Activated naive CD4-positive, alpha-beta T cell treated with anti-CD3 and anti-CD28 coated beads for 36 hours (primary cell): ENCODE measurements at regions of chr5 and their contacts with region 1.

Region 1: DNA sequence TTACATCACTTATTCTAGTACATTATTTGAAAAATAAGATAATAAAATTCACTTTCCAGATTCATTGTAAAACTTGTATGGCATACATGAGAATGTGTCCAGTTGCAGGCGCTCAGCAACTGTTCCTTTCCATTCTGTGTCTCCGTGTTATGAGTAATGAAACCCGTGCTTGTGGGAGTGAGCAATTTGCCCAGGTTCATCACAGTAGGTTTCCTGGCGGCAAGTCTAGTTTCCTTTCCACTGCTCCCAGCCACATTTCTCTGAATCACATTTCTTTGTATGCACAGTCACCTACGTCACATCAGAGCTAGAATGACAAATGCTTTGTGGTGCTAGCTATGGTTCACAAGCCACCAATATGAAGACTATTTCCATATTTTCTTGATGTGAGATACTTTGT is 39.9 kb downstream of the MOCS2 start:
- DNase-seq: peak; percentile 88
- H3K4me3 Mint-ChIP-seq: no peak overlapping the region
- H3K27ac Mint-ChIP-seq: peak overlapping the region; percentile 12
- H3K4me1 Mint-ChIP-seq: peaks cover 15% of the 10 kb centered on the region
- H3K27me3 Mint-ChIP-seq: no peaks in the 10 kb centered on the region

Region 2: DNA sequence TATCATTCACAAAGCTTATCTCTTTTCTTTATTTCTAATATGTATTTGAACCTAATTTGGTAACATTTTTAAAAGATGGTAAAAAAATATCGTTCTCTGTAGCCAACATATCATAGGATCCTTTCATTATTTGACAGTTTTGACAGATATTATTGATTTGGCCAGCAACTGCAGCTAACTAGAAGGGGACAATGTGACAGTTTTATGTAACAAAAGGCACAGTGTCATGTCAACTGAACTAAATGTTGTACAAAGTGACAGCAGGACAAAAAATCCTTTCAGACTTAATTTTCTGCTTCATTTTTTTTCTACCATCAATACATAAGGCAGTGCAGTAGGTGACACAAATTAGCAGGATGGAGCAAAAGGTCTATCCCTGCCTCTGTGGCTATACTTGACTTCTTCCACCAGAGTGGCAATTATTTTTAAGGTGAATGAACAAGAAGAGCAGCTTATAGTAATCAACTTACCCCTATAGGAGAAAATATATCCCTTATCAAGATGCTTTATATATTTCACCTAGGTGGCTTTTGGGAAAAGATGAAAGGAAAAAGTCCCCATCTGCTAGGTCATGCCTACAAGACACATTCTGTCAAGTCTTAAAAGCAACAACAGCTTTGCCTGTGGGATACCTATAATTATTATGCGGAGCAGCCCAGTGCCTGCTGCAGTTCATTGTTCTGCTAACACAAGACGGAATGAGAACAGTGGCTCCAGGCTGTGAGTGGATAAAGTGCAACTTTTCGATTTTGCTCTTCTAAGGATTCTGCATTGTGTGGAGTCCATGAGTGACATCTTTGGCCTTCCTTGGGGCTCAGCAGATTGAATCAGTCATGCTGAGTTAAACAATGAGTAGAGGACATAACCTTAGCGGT is 991.4 kb before region 1 on chr5:
- CTCF ChIA-PET with region 1: no interaction called
- intact Hi-C with region 1: no loop called
- DNase-seq: no peak
- H3K4me3 Mint-ChIP-seq: no peak overlapping the region
- H3K27ac Mint-ChIP-seq: no peak overlapping the region
- H3K4me1 Mint-ChIP-seq: no peaks in the 10 kb centered on the region
- H3K27me3 Mint-ChIP-seq: no peaks in the 10 kb centered on the region

Region 3: DNA sequence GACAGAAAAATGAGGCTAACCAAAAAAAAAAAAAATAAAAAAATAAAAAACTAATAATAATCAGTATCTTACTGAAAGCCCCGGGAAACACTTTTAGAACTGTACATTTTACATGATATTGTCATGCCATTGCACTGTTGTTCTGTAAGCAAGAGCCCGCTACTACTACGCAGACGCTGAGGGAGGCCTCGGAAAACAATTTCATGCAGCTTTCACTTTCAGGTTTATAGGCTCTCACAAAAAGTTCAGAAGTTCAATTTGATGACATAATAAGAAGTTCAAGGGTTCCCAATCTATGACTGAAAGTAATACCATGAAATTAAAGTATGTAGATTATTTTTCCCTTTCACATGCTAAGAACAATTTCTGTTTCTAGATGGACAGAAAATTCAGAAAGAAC is 600.2 kb before region 1 on chr5:
- CTCF ChIA-PET with region 1: no interaction called
- intact Hi-C with region 1: loop called (anchors 2 kb)
- DNase-seq: peak; percentile 7
- H3K4me3 Mint-ChIP-seq: no peak overlapping the region
- H3K27ac Mint-ChIP-seq: no peak overlapping the region
- H3K4me1 Mint-ChIP-seq: peaks cover 6% of the 10 kb centered on the region
- H3K27me3 Mint-ChIP-seq: no peaks in the 10 kb centered on the region

Region 4: GRCh38 chr5:52878656-52879055 is 191.0 kb before region 1 on chr5:
- CTCF ChIA-PET with region 1: no interaction called
- intact Hi-C with region 1: no loop called
- DNase-seq: no peak
- H3K4me3 Mint-ChIP-seq: no peak overlapping the region
- H3K27ac Mint-ChIP-seq: no peak overlapping the region
- H3K4me1 Mint-ChIP-seq: no peaks in the 10 kb centered on the region
- H3K27me3 Mint-ChIP-seq: no peaks in the 10 kb centered on the region

Region 5: DNA sequence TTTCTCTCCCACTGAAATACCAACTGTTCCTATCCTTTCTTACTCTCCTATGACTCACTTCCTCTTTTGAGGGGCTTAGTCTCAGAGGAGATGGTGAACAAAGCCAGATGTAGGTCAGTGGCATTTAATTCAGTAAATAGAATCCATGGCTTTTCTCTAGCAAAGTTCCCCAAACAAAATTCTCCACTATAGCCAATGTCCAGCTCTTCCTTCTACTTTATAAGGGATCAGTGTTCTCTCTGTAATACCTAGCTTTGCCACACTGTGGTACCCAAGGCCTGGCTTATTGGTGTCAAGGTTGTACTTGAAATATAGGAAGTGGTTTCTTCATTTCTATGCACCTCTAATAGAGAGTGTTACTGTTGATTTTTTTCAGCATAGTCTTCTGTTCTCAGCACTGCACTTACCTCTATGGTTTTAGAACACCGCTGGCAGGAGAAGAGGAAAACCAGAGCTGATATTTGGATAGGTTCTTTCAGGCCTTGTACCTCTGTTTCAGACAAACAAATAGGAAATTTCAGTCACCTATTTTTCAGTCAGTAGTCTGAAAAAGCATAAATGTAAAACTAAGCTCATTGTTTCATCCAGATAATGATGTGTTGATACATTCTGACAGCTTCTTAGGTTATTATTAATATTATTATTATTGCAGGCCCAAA is 121.1 kb before region 1 on chr5:
- CTCF ChIA-PET with region 1: interaction called, 11 read pairs
- intact Hi-C with region 1: loop called (anchors 1 kb)
- DNase-seq: peak; percentile 83
- H3K4me3 Mint-ChIP-seq: no peak overlapping the region
- H3K27ac Mint-ChIP-seq: no peak overlapping the region
- H3K4me1 Mint-ChIP-seq: peaks cover 14% of the 10 kb centered on the region
- H3K27me3 Mint-ChIP-seq: no peaks in the 10 kb centered on the region

Region 6: DNA sequence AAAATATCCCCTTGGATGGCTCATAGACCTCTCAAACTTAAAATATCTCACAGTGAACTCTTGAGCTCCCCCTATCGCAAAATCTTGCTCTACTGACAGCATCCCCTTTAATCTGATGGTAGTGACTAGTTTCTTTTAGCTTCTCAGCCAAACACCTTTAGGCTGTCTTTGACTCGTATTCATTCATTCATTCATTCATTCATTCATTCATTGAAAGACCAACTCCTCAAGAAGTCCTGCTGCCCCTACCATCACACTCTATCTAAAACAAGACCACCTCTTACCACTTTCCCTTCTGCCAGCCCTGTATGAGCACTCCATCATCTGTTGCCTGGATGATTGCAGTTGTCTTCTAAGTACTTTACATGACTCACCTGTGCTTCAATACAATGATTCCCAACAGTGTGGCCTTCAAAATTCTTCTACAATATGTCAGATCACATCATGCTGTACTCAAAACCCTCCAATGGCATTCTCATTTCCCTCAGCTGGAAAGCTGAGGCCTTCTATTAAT is 33.7 kb before region 1 on chr5:
- CTCF ChIA-PET with region 1: interaction called, 7 read pairs
- intact Hi-C with region 1: loop called (anchors 1 kb)
- DNase-seq: no peak
- H3K4me3 Mint-ChIP-seq: no peak overlapping the region
- H3K27ac Mint-ChIP-seq: no peak overlapping the region
- H3K4me1 Mint-ChIP-seq: peaks cover 39% of the 10 kb centered on the region
- H3K27me3 Mint-ChIP-seq: no peaks in the 10 kb centered on the region

Region 7: GRCh38 chr5:53080271-53080670 is 10.6 kb after region 1 on chr5:
- CTCF ChIA-PET with region 1: interaction called, 4 read pairs
- intact Hi-C with region 1: loop called (anchors 1 kb)
- DNase-seq: peak; percentile 18
- H3K4me3 Mint-ChIP-seq: no peak overlapping the region
- H3K27ac Mint-ChIP-seq: no peak overlapping the region
- H3K4me1 Mint-ChIP-seq: peaks cover 35% of the 10 kb centered on the region
- H3K27me3 Mint-ChIP-seq: no peaks in the 10 kb centered on the region

Region 8: DNA sequence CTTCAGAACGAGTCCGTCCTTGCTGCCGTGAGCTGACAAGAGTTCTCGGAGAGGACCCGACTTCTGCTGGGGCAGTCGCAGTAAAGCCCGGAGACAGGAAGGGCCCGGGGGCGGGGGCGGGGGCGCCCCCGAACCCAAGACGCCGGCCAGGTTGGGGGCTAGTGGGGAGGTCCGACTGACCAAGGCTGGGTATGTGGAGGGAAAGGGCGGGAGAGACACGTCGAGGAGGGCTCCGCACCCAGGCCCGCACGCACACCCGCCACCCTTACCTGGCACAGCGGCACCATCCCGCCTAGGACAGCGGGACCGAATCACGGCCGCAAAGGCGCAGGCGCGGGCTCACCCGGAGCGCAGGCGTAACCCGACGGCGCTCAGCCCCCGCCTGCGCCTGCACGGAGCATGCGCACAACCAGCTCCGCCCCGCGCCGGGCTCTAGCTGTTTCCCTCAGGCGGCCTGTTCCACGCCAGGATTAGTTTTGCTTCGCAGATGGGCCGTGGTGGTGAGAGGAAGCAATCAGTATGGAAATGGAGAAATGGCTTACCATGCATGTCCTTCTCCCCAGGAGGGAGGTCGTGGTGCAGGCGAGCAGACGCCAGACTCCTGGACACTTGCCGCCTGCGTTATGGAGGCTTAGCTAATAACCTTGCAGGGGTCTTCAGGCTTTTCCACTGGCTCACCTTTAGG is 40.0 kb after region 1 on chr5 and contains the start of gene MOCS2:
- CTCF ChIA-PET with region 1: interaction called, 4 read pairs
- intact Hi-C with region 1: loop called (anchors 1 kb)
- DNase-seq: peak; percentile 91
- H3K4me3 Mint-ChIP-seq: peak within 1 kb of the TSS; percentile 92
- H3K27ac Mint-ChIP-seq: peak within 1 kb of the TSS; percentile 86
- H3K4me1 Mint-ChIP-seq: peaks cover 37% of the 10 kb centered on the region
- H3K27me3 Mint-ChIP-seq: no peaks in the 10 kb centered on the region
- total RNA-seq, gene MOCS2: 29.4 to 30.9 TPM

Region 9: GRCh38 chr5:53123702-53124101 is 54.1 kb after region 1 on chr5:
- CTCF ChIA-PET with region 1: no interaction called
- intact Hi-C with region 1: no loop called
- DNase-seq: no peak
- H3K4me3 Mint-ChIP-seq: no peak overlapping the region
- H3K27ac Mint-ChIP-seq: no peak overlapping the region
- H3K4me1 Mint-ChIP-seq: no peaks in the 10 kb centered on the region
- H3K27me3 Mint-ChIP-seq: no peaks in the 10 kb centered on the region

Region 10: GRCh38 chr5:53246042-53246836 is 176.6 kb after region 1 on chr5:
- CTCF ChIA-PET with region 1: no interaction called
- intact Hi-C with region 1: no loop called
- DNase-seq: no peak
- H3K4me3 Mint-ChIP-seq: no peak overlapping the region
- H3K27ac Mint-ChIP-seq: no peak overlapping the region
- H3K4me1 Mint-ChIP-seq: no peaks in the 10 kb centered on the region
- H3K27me3 Mint-ChIP-seq: peaks cover 4% of the 10 kb centered on the region